ENCODE measurements at regions of chr3 and their contacts with region 1.

Region 1: GRCh38 chr3:159988617-159989271 is at the start of gene IL12A:
- DNase-seq: peak; percentile 81 to 82
- ATAC-seq: peak; percentile 96 to 99
- H3K4me3 ChIP-seq: peak within 1 kb of the TSS; percentile 85
- H3K27ac ChIP-seq: peak within 1 kb of the TSS; percentile 84 to 90
- H3K4me1 ChIP-seq: 0 out of 3 replicates have a peak, but pooled peaks cover 8% of the 10 kb centered on the region
- CTCF ChIP-seq: peak; percentile 94
- EP300 ChIP-seq: no peak
- POLR2A ChIP-seq: no peak
- RAD21 ChIP-seq: peak; percentile 59 to 65
- polyA plus RNA-seq, gene IL12A: 0.66 and 1.7 TPM in 2 replicates

Region 2: GRCh38 chr3:159897331-159898075 is 91.2 kb before region 1 on chr3:
- CTCF ChIA-PET with region 1: interaction called, 10 read pairs
- POLR2A ChIA-PET with region 1: no interaction called
- DNase-seq: no peak
- ATAC-seq: no peak
- H3K4me3 ChIP-seq: no peak overlapping the region
- H3K27ac ChIP-seq: no peak overlapping the region
- H3K4me1 ChIP-seq: no peaks in the 10 kb centered on the region
- CTCF ChIP-seq: no peak
- EP300 ChIP-seq: no peak
- POLR2A ChIP-seq: no peak
- RAD21 ChIP-seq: no peak

Region 3: GRCh38 chr3:159929435-159930141 is 59.2 kb before region 1 on chr3:
- CTCF ChIA-PET with region 1: interaction called, 48 read pairs
- POLR2A ChIA-PET with region 1: interaction called, 3 read pairs
- DNase-seq: peak; percentile 44 to 66
- ATAC-seq: peak; percentile 58 to 70
- H3K4me3 ChIP-seq: no peak overlapping the region
- H3K27ac ChIP-seq: peak overlapping the region; percentile 70 to 82
- H3K4me1 ChIP-seq: peaks cover 25% of the 10 kb centered on the region
- CTCF ChIP-seq: peak; percentile 17; the same call in 1 of the 3 replicates
- EP300 ChIP-seq: no peak
- POLR2A ChIP-seq: no peak
- RAD21 ChIP-seq: peak; percentile 31 to 45; a peak in 4 of 5 replicates

Region 4: DNA sequence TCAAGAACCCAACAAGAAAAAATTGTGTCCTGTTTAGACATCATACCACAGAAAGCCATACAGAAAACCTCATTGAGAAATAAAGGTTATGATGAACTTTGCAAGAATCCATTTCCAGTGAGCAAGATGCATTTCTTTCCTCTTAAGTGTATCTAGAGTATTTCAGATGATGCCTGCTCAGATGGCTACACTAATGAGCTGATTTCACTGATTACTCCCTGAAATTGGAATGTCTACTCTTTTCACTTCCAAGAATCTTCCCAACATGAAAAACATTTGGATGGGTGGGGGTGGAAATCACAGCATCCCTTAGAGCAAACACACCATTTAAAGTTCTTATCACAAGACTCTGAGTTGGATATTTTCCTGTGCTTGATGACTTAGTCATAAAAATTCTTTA is 41.5 kb before region 1 on chr3:
- CTCF ChIA-PET with region 1: interaction called, 18 read pairs
- POLR2A ChIA-PET with region 1: no interaction called
- DNase-seq: no peak
- ATAC-seq: no peak
- H3K4me3 ChIP-seq: no peak overlapping the region
- H3K27ac ChIP-seq: no peak overlapping the region
- H3K4me1 ChIP-seq: 0 out of 3 replicates have a peak, but pooled peaks cover 3% of the 10 kb centered on the region
- CTCF ChIP-seq: no peak
- EP300 ChIP-seq: no peak
- POLR2A ChIP-seq: no peak
- RAD21 ChIP-seq: no peak

Region 5: DNA sequence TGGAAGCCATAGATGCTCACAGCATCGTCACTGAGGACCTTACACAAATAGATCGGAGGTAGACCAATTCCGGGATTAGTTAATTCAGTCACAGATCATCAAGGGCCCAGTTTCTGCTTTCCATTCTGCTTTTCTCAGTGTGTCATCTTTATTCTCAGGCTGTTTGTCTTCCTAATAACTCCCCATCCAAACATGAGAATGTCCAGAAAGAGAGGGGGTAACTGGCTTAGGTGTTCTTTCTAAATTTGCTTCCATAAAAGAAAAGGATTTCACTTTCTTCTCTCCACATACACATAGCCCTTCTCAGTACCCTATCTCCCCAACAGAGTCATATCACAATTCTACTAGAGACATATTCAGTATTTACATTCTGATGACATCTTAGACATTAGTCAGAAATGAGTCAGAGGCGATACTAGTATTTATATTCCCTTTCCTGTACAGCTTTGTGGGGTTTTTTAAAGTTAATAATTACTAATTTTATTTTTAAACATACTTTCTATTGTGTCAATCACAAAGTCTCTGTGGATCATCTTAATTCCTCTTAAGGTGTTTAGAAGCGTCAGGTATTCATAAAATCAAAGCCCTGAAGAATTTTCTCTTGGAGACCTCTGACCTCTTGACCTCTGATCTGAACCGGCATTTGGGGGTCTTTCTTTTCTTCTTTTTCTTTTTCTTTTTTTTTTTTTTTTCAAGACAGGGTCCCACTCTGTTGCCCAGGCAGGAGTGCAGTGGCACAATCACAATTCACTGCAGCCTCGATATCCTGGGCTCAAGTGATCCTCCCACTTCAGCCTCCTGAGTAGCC is 24.4 kb before region 1 on chr3:
- CTCF ChIA-PET with region 1: interaction called, 29 read pairs
- POLR2A ChIA-PET with region 1: no interaction called
- DNase-seq: peak; percentile 73 to 80
- ATAC-seq: peak; percentile 98 to 99
- H3K4me3 ChIP-seq: no peak overlapping the region
- H3K27ac ChIP-seq: peak overlapping the region; percentile 53 to 66
- H3K4me1 ChIP-seq: peaks cover 22% of the 10 kb centered on the region
- CTCF ChIP-seq: no peak
- EP300 ChIP-seq: no peak
- POLR2A ChIP-seq: no peak
- RAD21 ChIP-seq: no peak

Region 6: GRCh38 chr3:159978353-159978752 is 10.4 kb before region 1 on chr3:
- CTCF ChIA-PET with region 1: interaction called, 75 read pairs
- POLR2A ChIA-PET with region 1: no interaction called
- DNase-seq: no peak
- ATAC-seq: no peak
- H3K4me3 ChIP-seq: no peak overlapping the region
- H3K27ac ChIP-seq: no peak overlapping the region
- H3K4me1 ChIP-seq: no peaks in the 10 kb centered on the region
- CTCF ChIP-seq: no peak
- EP300 ChIP-seq: no peak
- POLR2A ChIP-seq: no peak
- RAD21 ChIP-seq: no peak

Region 7: GRCh38 chr3:160065282-160065681 is 76.5 kb after region 1 on chr3:
- CTCF ChIA-PET with region 1: no interaction called
- POLR2A ChIA-PET with region 1: no interaction called
- DNase-seq: no peak
- ATAC-seq: no peak
- H3K4me3 ChIP-seq: no peak overlapping the region
- H3K27ac ChIP-seq: no peak overlapping the region
- H3K4me1 ChIP-seq: no peaks in the 10 kb centered on the region
- CTCF ChIP-seq: no peak
- EP300 ChIP-seq: no peak
- POLR2A ChIP-seq: no peak
- RAD21 ChIP-seq: no peak

Region 8: GRCh38 chr3:160163229-160163878 is 174.6 kb after region 1 on chr3:
- CTCF ChIA-PET with region 1: no interaction called
- POLR2A ChIA-PET with region 1: no interaction called
- DNase-seq: peak; percentile 26 to 36
- ATAC-seq: peak; percentile 54 to 83; a peak in 3 of 6 replicates
- H3K4me3 ChIP-seq: no peak overlapping the region
- H3K27ac ChIP-seq: peak overlapping the region; percentile 28 to 58; a peak in 3 of 6 replicates
- H3K4me1 ChIP-seq: peaks cover 4% of the 10 kb centered on the region
- CTCF ChIP-seq: peak; percentile 73
- EP300 ChIP-seq: no peak
- POLR2A ChIP-seq: no peak
- RAD21 ChIP-seq: peak; percentile 76 to 84

Region 9: GRCh38 chr3:160381470-160381869 is 392.7 kb after region 1 on chr3:
- CTCF ChIA-PET with region 1: no interaction called
- POLR2A ChIA-PET with region 1: no interaction called
- DNase-seq: no peak
- ATAC-seq: no peak
- H3K4me3 ChIP-seq: no peak overlapping the region
- H3K27ac ChIP-seq: no peak overlapping the region
- H3K4me1 ChIP-seq: 0 out of 3 replicates have a peak, but pooled peaks cover 2% of the 10 kb centered on the region
- CTCF ChIP-seq: no peak
- EP300 ChIP-seq: no peak
- POLR2A ChIP-seq: no peak
- RAD21 ChIP-seq: no peak